IMR-90 (cell line): ENCODE measurements at regions of chr1 and their contacts with region 1.

Region 1: GRCh38 chr1:226626577-226626956 is 78.0 kb downstream of the STUM start:
- DNase-seq: peak; percentile 59
- ATAC-seq: peak; percentile 98
- H3K4me3 ChIP-seq: no peak overlapping the region
- H3K27ac ChIP-seq: no peak overlapping the region
- H3K4me1 ChIP-seq: no peaks in the 10 kb centered on the region
- H3K27me3 ChIP-seq: peaks cover 1% of the 10 kb centered on the region
- CTCF ChIP-seq: peak; percentile 89
- POLR2A ChIP-seq: no peak
- RAD21 ChIP-seq: peak; percentile 78

Region 2: DNA sequence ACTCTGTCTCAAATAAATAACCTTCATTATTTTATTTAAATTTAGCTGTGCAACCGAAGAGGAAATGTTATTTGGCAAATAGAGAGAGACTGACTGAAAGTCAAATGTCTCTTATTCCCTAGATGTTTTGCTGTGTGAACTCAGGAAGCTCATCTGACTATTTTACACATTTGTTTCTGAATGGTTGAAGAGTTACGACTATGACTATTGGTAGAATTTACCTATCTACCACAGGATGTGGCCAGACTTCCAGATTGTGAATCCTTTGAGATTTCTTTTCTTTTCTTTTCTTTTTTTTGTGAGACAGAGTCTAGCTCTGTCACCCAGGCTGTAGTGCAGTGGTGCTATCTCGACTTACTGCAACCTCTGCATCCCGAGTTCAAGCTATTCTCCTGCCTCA is 622.2 kb before region 1 on chr1:
- CTCF ChIA-PET with region 1: no interaction called
- POLR2A ChIA-PET with region 1: no interaction called
- dilution Hi-C with region 1: no loop called
- in situ Hi-C with region 1: no loop called
- intact Hi-C with region 1: no loop called
- DNase-seq: no peak
- ATAC-seq: no peak
- H3K4me3 ChIP-seq: no peak overlapping the region
- H3K27ac ChIP-seq: no peak overlapping the region
- H3K4me1 ChIP-seq: 0 out of 2 replicates have a peak, but pooled peaks cover 2% of the 10 kb centered on the region
- H3K27me3 ChIP-seq: peaks cover under 1% of the 10 kb centered on the region; the same call in 1 of the 2 replicates
- CTCF ChIP-seq: no peak
- POLR2A ChIP-seq: no peak
- RAD21 ChIP-seq: no peak

Region 3: GRCh38 chr1:226827968-226828513 is 201.5 kb after region 1 on chr1:
- CTCF ChIA-PET with region 1: interaction called, 8 read pairs
- POLR2A ChIA-PET with region 1: no interaction called
- dilution Hi-C with region 1: no loop called
- in situ Hi-C with region 1: no loop called
- intact Hi-C with region 1: loop called (anchors 2 kb)
- DNase-seq: peak; percentile 93
- ATAC-seq: peak; percentile 100
- H3K4me3 ChIP-seq: no peak overlapping the region
- H3K27ac ChIP-seq: peak overlapping the region; percentile 76
- H3K4me1 ChIP-seq: peaks cover 2% of the 10 kb centered on the region
- H3K27me3 ChIP-seq: peaks cover 4% of the 10 kb centered on the region; the same call in 1 of the 2 replicates
- CTCF ChIP-seq: peak; percentile 97
- POLR2A ChIP-seq: peak; percentile 51; the same call in 1 of the 2 replicates
- RAD21 ChIP-seq: peak; percentile 98

Region 4: DNA sequence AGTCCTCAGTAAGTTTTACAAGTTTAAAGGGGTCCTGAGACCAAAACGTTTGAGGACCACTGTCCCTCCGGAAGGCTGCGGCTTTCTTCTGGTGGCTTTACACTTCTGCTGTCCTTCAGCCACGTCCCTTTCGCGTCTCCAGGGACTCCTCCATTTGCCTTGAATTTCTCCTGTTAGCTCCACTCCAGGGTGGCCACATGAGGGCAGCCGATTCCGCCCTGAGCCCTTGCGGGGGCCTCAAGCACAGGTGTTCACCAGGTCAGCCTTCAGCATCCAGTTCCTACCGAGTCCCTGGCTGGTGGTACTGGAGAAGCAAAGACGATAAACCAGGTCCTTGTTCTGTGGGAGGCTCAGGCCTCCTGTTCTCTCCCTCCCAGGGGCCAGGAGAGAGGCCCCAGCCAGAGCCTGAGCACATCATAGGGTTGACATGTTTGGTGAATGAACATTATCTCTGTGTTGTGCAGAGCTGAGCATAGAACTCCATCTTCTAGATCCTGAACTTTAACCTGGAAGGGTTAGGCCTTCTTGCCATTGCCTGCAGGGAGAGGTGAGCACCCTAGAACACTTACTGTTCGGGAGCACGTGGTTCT is 286.1 kb after region 1 on chr1:
- CTCF ChIA-PET with region 1: no interaction called
- POLR2A ChIA-PET with region 1: no interaction called
- dilution Hi-C with region 1: no loop called
- in situ Hi-C with region 1: no loop called
- intact Hi-C with region 1: no loop called
- DNase-seq: peak; percentile 6
- ATAC-seq: peak; percentile 59
- H3K4me3 ChIP-seq: no peak overlapping the region
- H3K27ac ChIP-seq: no peak overlapping the region
- H3K4me1 ChIP-seq: no peaks in the 10 kb centered on the region
- H3K27me3 ChIP-seq: no peaks in the 10 kb centered on the region
- CTCF ChIP-seq: peak; percentile 39
- POLR2A ChIP-seq: no peak
- RAD21 ChIP-seq: peak; percentile 49